K562 (cell line): ENCODE measurements at regions of chr3 and their contacts with region 1.

Region 1: GRCh38 chr3:113844622-113845222 is 6.1 kb downstream of the GRAMD1C start:
- DNase-seq: peak in 2 of 4 experiments; percentile 15 to 21
- ATAC-seq: peak; percentile 58; the same call in 1 of the 3 replicates
- H3K4me3 ChIP-seq: no peak overlapping the region
- H3K27ac ChIP-seq: no peak overlapping the region
- H3K4me1 ChIP-seq: no peaks in the 10 kb centered on the region
- H3K27me3 ChIP-seq: no peaks in the 10 kb centered on the region
- CTCF ChIP-seq: peak in 2 of 3 experiments; percentile 25 to 50; a peak in 3 of 6 replicates
- EP300 ChIP-seq: no peak
- POLR2A ChIP-seq: no peak
- RAD21 ChIP-seq: peak; percentile 18 to 52; a peak in 3 of 4 replicates

Region 2: DNA sequence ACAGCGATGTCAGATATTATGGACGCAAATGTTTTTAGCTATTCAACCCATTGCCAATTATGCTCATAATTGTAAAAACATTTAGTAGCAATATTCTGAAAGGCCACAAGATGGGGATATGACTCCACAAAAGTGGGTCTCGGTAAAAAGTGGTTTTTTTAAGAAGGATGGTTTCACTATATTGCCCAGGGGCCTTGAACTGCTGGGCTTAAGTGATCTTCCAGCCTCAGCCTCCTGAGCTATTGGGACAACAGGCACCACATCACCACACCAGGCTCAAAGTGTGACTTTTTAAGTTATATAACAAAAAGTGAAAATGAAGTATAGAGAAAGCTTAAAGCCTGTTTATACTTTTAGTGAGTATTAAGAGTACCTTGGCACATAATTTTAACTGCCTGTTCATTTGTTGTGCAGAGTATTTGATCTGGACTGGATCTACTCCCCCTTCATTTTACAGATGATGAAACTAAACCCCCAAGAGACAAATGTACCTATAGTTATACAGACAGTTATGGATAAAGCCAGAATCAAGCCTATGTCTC is 108.1 kb before region 1 on chr3:
- CTCF ChIA-PET with region 1: no interaction called
- POLR2A ChIA-PET with region 1: no interaction called
- in situ Hi-C with region 1: no loop called
- intact Hi-C with region 1: loop called (anchors 5 kb)
- DNase-seq: peak in 2 of 4 experiments; percentile 27 to 54
- ATAC-seq: peak; percentile 73
- H3K4me3 ChIP-seq: no peak overlapping the region
- H3K27ac ChIP-seq: peak overlapping the region; percentile 19; the same call in 1 of the 3 replicates
- H3K4me1 ChIP-seq: peaks cover 0 to 10% of the 10 kb centered on the region in 2 experiments; a peak in 2 of 5 replicates
- H3K27me3 ChIP-seq: no peaks in the 10 kb centered on the region
- CTCF ChIP-seq: peak; percentile 35 to 68 (median 47); a peak in 4 of 6 replicates
- EP300 ChIP-seq: no peak
- POLR2A ChIP-seq: no peak
- RAD21 ChIP-seq: peak; percentile 58 to 62

Region 3: GRCh38 chr3:113867506-113867905 is 22.8 kb after region 1 on chr3:
- CTCF ChIA-PET with region 1: no interaction called
- POLR2A ChIA-PET with region 1: no interaction called
- in situ Hi-C with region 1: no loop called
- intact Hi-C with region 1: no loop called
- DNase-seq: no peak
- ATAC-seq: no peak
- H3K4me3 ChIP-seq: no peak overlapping the region
- H3K27ac ChIP-seq: no peak overlapping the region
- H3K4me1 ChIP-seq: no peaks in the 10 kb centered on the region
- H3K27me3 ChIP-seq: no peaks in the 10 kb centered on the region
- CTCF ChIP-seq: no peak
- EP300 ChIP-seq: no peak
- POLR2A ChIP-seq: no peak
- RAD21 ChIP-seq: no peak

Region 4: DNA sequence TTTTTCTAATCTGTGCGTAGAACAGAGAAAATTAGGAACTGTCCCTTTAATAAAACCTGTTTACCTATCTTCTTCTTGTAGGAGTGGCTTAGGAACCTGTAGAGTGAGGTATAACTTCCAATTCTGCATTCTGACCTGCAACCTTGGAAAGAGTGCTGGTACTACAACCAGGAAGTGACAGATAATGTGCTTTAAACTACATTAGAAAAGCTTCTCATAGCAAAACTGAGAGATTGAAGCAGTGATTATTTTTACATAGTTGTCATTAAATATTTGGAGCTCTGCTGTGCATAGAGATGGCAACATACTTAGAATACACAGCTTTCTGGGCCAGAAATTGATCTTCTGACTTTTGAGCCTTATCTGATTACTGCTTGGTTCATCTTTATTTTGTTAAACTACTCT is 52.7 kb after region 1 on chr3:
- CTCF ChIA-PET with region 1: no interaction called
- POLR2A ChIA-PET with region 1: no interaction called
- in situ Hi-C with region 1: no loop called
- intact Hi-C with region 1: no loop called
- DNase-seq: no peak
- ATAC-seq: no peak
- H3K4me3 ChIP-seq: no peak overlapping the region
- H3K27ac ChIP-seq: no peak overlapping the region
- H3K4me1 ChIP-seq: no peaks in the 10 kb centered on the region
- H3K27me3 ChIP-seq: peaks cover 0 to 2% of the 10 kb centered on the region in 2 experiments; a peak in 1 of 5 replicates
- CTCF ChIP-seq: no peak
- EP300 ChIP-seq: no peak
- POLR2A ChIP-seq: no peak
- RAD21 ChIP-seq: no peak